Psoas muscle (tissue), 8 donors: ENCODE measurements at regions of chr19 and their contacts with region 1.

Region 1: DNA sequence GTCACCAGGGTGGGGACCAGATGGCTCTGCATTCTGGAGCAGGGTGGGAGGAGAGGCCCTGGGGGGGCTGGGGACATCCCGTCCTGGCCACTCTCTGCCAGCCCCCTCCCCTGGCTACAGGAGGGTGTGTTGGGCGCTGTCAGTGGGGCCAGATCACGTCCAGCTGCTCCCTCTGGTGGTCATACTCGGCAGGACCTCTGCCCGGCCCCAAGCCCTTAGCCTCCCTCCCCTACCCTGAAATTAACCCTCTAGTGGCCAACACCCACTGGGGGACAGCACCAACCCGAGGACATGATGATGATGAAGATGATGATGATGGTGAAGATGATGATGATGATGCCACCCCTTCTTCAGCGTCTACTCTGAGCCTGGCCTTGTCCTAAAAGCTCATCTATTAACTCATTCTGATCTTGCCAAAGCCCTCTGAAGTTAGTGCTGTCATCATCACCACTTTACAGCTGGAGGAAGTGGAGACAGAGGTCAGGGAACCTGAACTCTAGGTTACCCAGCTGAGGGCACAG is 590 bp upstream of the LGI4 start:
- DNase-seq: peak; percentile 78 to 94
- ATAC-seq: peak; percentile 58 to 71 (median 60)
- H3K4me3 ChIP-seq: peak overlapping the region; percentile 66
- H3K27ac ChIP-seq: peak overlapping the region; percentile 97
- H3K4me1 ChIP-seq: peaks cover 28% of the 10 kb centered on the region
- H3K27me3 ChIP-seq: no peaks in the 10 kb centered on the region
- CTCF ChIP-seq: peak; percentile 92

Region 2: GRCh38 chr19:35044317-35045117 is 90.9 kb before region 1 on chr19:
- intact Hi-C with region 1: loop called (anchors 5 kb)
- DNase-seq: peak; percentile 63 to 82
- ATAC-seq: no peak
- H3K4me3 ChIP-seq: no peak overlapping the region
- H3K27ac ChIP-seq: peak overlapping the region; percentile 94
- H3K4me1 ChIP-seq: peaks cover 60% of the 10 kb centered on the region
- H3K27me3 ChIP-seq: no peaks in the 10 kb centered on the region
- CTCF ChIP-seq: peak; percentile 98

Region 3: DNA sequence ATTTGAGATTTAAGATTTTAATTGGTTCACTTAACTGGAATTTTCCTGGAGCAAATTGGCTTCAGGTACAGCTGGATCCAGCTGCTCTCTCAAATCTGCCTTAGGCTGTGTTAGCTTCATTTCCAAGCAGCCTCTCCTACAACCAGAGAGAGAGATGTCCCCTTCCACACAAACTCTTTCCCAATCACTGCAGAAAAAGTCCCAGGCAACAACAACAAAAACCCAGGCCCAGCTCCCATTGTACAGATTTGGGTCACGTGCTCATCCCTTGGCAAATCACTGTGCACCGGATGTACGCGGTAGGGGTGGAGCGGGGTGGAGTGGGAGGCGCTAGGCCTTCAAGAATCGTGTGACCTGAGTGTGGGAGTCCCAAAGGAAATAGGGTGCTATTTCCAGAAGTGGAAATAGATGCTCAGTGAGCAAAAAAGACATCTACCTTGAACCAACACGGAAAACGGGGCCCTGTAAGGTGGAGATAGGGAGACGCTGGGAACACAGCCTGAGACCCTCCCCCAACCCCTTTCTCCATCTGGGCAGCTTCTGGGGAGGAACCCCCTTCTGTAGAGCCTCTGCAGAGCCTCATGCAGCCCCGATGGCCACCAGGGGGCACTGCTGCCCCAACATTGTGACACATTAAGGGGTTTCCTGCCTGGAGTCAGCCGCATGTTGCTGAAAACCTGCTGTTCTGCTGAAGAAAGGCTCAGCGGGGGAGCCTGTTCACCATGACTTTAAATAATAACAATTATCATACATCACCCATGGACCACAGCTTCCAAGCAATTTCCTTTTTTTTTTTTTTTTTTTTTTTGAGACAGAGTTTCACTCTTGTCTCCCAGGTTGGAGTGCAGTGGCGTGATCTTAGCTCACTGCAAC is 68.5 kb before region 1 on chr19:
- intact Hi-C with region 1: loop called (anchors 2 to 5 kb)
- DNase-seq: peak; percentile 87 to 94
- ATAC-seq: peak; percentile 84 to 90 (median 88)
- H3K4me3 ChIP-seq: no peak overlapping the region
- H3K27ac ChIP-seq: no peak overlapping the region
- H3K4me1 ChIP-seq: peaks cover 2% of the 10 kb centered on the region
- H3K27me3 ChIP-seq: no peaks in the 10 kb centered on the region
- CTCF ChIP-seq: peak; percentile 92

Region 4: DNA sequence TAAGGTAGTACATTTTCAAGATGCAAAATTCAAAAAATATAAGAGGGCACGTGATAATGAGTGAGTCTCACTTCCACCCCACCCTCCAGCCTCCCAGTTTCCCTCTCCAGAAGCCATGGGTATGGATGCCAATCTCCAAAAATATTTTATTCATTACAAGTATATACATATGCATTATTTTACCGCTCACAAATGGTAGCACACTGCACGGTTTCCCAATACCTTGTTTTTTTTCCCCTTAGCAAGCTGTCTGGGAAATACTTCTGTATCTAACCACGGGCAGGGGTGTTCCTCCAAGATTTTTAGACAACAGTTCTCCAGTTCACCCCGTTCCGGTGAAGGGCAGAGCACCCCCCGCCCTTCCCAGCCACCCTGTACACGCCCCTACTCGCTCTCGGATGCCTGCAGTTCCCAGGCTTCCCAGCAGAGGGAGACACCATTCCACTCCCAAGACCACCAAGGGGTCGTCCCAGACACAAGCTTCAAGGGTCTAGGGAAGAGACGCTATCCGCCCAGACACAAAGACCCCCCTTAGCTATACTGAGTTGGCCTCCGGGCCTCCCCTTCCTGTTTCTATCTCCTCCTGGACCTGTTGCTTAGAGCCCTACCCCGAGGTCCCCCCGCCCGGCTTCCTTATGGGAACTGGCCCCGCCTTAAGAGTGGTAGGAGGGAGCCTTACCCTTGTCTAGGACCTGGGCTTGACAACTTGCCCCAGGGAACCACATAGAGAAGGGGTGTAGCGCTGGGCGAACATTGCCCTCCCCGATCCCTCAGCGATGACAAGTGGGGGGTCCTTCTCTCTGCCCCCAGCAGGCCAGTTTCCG is 20.9 kb before region 1 on chr19:
- intact Hi-C with region 1: loop called (anchors 1 to 2 kb)
- DNase-seq: peak; percentile 67 to 83
- ATAC-seq: peak; percentile 78 to 91 (median 82)
- H3K4me3 ChIP-seq: peak overlapping the region; percentile 63
- H3K27ac ChIP-seq: no peak overlapping the region
- H3K4me1 ChIP-seq: no peaks in the 10 kb centered on the region
- H3K27me3 ChIP-seq: no peaks in the 10 kb centered on the region
- CTCF ChIP-seq: peak; percentile 98